ENCODE measurements at regions of chr12 and their contacts with region 1.

Region 1: GRCh38 chr12:2877047-2877952 is at the starts of genes FOXM1 and RHNO1:
- DNase-seq: peak; percentile 91 to 99 (median 96)

Region 2: DNA sequence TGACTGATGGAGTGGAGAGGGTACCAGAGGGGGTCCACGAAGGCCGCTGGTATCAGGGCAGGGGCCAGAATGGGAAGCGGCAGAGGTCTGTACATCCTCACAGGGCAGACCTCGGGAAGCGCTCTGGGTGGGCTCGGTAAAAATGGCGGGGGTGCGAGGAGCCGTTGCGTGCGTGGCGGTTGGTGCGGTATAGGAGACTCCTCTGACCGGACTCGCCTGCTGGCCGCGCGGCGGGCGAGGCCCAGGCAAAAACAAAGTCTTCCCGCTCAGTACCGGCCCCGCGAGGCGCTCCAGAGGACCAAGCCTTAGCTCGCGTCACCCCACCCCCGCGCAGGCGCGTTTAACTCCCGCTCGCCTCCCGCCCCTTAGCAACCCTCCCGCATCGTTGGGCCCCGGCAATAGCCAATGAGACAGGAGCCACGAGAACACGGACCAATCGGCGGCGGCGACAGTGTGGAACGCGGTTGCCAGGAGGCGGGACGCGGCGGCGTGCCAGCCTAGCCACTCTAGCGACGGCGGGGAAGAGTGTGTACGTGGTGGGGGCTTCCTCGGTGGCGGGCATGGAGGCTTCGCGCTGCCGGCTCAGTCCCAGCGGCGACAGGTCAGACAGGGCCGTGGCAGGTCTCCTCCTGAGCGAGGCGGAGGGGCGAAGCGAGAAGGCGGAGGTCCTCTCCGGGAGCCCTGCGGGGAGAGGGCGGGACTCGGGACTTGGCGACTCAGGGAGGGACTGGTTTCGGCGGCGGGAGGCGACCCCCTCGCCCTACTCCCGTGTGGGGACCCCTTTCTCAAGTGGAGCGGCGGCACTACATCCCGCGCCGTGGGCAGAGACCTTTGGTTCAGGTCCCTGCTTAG is 13.3 kb after region 1 on chr12 and contains the start of gene TULP3:
- intact Hi-C with region 1: loop called (anchors 2 kb)
- DNase-seq: peak; percentile 98 to 100 (median 100)

Region 3: GRCh38 chr12:3168223-3169221 is 291.2 kb after region 1 on chr12:
- intact Hi-C with region 1: no loop called
- DNase-seq: peak in 8 of 10 donors; percentile 47 to 96 (median 71)

Measured in posterior cingulate gyrus (tissue), 11 donors.